Activated CD4-positive, alpha-beta T cell treated with anti-CD3 and anti-CD28 coated beads, Interleukin-2, amount 10 ng/mL, durations not matched to agents 24 days and 14 days (primary cell): ENCODE measurements at regions of chr16 and their contacts with region 1.

Region 1: DNA sequence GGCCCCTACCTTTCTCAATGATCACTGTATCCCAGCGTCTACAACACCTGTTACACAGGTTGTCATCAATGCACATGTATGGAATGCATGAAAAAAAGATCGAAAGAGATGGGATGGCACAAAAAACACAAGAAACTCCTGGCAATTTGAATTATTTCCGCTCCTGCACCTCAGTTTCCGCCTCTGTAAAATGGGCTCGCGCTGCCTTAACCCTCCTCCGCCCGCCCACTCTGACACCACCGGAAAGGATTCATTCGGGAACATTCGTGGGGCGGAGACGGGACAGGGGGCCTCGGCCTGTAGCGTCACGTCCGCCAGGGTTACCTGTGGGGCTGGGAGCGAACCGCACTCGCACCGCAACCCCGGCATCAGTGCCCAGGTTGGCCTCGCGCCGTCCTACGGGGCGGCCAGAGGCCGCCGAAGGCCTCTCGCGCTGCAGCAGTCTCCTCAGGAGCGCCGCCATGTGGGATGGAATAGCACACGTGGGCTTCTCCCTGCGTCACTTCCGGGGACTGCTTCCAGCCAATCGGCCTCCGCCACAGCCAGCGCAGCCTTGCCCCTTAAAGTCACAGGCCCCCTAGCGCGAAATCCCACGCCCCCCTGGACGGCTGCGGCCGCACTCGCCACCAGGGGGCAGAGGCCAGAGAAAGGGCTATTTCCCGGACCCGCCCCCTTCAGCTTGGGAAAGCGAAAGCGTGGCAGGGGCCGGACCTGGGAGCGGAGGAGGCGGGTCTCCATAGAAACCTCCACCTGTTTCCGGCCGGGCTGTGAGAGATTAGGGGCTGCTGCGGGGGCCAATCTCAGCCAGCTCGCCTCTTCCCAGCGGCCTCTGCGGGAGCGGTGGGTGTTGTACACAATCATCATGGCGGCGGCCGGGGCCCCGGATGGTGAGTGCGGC is at the starts of genes EARS2 and UBFD1:
- DNase-seq: peak; percentile 99
- H3K4me3 Mint-ChIP-seq: peak within 1 kb of the TSS; percentile 98
- H3K27ac Mint-ChIP-seq: peak within 1 kb of the TSS; percentile 96
- H3K4me1 Mint-ChIP-seq: peaks cover 34% of the 10 kb centered on the region
- H3K27me3 Mint-ChIP-seq: no peaks in the 10 kb centered on the region
- total RNA-seq, gene EARS2: 29.7 and 31.4 TPM in 2 replicates
- total RNA-seq, gene UBFD1: 62.0 and 70.6 TPM in 2 replicates

Region 2: DNA sequence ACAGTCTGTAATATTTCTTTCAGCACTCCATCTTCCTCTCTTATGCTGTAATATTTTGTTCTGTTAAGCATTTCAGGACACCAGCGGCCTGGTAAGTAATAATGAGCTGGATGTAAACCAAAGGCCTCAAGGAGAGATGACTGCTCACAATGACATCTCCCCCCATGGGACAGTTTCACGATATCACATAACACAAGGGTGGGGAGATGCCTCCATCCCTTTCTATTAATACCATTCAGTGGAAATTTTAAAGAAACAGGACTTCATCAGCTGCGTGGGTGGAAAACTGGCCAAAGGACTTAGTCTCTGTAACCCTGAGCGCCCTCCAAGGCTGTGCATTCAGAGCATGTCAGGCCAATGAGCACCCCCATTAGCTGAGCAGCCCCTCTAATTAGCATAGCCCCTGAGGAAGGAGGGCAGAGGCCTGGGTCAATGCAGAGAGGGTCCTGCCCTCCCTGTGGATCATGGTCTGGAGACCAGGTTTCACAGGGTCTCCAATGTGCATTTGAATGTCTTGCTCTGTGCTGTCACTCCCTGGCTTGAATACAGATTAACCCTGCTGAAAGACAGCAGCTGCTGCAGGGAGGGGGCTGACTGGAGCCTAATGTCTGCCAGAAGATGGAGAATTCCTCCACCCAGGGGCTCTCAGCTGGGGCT is 586.8 kb before region 1 on chr16:
- intact Hi-C with region 1: no loop called
- DNase-seq: no peak
- H3K4me3 Mint-ChIP-seq: no peak overlapping the region
- H3K27ac Mint-ChIP-seq: no peak overlapping the region
- H3K4me1 Mint-ChIP-seq: no peaks in the 10 kb centered on the region
- H3K27me3 Mint-ChIP-seq: peaks cover 4% of the 10 kb centered on the region

Region 3: DNA sequence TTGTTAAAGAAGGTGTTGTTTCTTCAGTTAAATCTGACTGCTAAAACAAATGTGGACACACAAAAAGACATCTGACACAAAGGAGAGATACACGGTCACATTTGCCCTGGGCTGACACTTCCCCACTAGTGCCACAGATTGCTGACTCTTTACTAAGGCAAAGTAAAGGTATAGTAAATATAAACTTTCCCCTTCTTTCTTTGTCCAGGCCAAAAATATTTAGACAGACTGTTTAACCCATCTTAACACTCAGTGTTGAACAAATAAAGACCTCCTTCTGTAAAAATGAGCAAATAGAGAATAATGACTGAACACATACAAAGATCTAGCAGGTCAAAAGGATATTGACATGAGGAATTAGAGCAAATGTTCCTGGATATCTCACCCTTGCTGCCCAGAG is 316.1 kb before region 1 on chr16:
- intact Hi-C with region 1: no loop called
- DNase-seq: no peak
- H3K4me3 Mint-ChIP-seq: no peak overlapping the region
- H3K27ac Mint-ChIP-seq: no peak overlapping the region
- H3K4me1 Mint-ChIP-seq: no peaks in the 10 kb centered on the region
- H3K27me3 Mint-ChIP-seq: no peaks in the 10 kb centered on the region

Region 4: DNA sequence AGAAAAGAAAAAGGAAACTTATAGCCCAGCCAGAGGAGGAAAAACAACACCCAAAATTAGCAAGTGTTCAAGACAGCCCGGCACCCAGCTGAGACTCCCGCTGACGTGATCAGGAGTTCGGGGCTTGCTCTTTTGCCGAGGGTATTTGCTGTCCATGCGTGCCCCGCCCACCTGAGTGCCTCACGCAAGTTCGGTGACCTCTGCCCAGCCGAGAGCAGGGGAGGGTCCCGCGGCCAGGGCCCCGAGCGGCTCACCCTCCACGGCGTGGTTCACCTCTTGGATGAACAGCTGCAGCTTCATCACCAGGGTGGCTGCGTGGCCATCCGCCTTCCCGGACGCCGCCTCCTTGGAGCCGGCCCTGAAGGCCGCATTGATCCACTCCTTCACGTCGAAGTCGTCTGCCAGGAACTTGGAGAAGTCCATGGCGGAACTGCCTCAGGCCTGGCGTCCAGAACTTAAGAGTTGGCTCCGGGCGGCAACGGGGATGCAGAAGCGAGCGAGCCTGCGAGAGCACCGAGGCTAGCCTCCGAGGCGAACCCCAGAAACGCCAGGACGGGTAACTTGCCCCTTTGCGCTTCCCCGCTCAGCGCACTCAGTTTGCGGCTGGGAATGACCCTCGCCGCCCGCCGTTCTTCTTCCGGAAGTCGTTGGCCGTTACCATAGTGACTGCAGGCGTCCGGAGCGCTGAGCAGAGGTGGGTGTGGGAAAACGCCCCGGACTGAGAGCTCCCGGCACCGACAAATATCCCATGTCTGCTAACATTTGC is 104.4 kb before region 1 on chr16 and contains the start of gene COG7:
- intact Hi-C with region 1: loop called (anchors 1 kb)
- DNase-seq: peak; percentile 96
- H3K4me3 Mint-ChIP-seq: peak within 1 kb of the TSS; percentile 98
- H3K27ac Mint-ChIP-seq: peak within 1 kb of the TSS; percentile 95
- H3K4me1 Mint-ChIP-seq: peaks cover 16% of the 10 kb centered on the region
- H3K27me3 Mint-ChIP-seq: no peaks in the 10 kb centered on the region
- total RNA-seq, gene COG7: 21.6 and 25.6 TPM in 2 replicates

Region 5: GRCh38 chr16:23510164-23510914 is 46.8 kb before region 1 on chr16 and contains the start of gene GGA2:
- intact Hi-C with region 1: loop called (anchors 1 kb)
- DNase-seq: peak; percentile 94
- H3K4me3 Mint-ChIP-seq: peak within 1 kb of the TSS; percentile 91
- H3K27ac Mint-ChIP-seq: peak within 1 kb of the TSS; percentile 95
- H3K4me1 Mint-ChIP-seq: peaks cover 51% of the 10 kb centered on the region
- H3K27me3 Mint-ChIP-seq: no peaks in the 10 kb centered on the region
- total RNA-seq, gene GGA2: 109 and 113 TPM in 2 replicates

Region 6: GRCh38 chr16:23640931-23641765 is 84.0 kb after region 1 on chr16 and contains the starts of genes DCTN5 and PALB2:
- intact Hi-C with region 1: loop called (anchors 1 kb)
- DNase-seq: peak; percentile 97
- H3K4me3 Mint-ChIP-seq: peak within 1 kb of the TSS; percentile 97
- H3K27ac Mint-ChIP-seq: peak within 1 kb of the TSS; percentile 93
- H3K4me1 Mint-ChIP-seq: peaks cover 32% of the 10 kb centered on the region
- H3K27me3 Mint-ChIP-seq: no peaks in the 10 kb centered on the region
- total RNA-seq, gene DCTN5: 98.3 and 99.4 TPM in 2 replicates
- total RNA-seq, gene PALB2: 31.2 and 35.7 TPM in 2 replicates

Region 7: DNA sequence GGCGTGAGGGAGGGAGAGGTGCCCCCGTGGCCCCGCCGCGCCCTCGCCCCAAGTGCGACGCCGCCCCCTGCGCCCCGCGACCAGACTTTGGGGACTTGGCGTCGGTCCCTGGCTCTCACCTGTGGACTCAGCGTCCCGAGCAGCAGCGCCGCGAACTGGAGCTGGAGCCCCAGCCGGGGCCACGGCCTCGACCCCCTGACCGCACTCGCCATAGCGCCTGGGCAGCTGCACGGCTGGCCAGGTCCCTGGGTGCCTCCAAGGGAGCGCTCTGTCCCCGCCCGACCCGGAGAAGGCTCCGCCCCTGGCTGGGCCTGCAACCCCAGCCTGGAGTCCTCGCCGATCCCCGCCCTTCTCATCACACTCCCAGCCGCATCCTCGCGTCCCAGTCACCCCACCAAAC is 155.8 kb after region 1 on chr16 and contains the start of gene ERN2:
- intact Hi-C with region 1: no loop called
- DNase-seq: no peak
- H3K4me3 Mint-ChIP-seq: no peak within 1 kb of the TSS
- H3K27ac Mint-ChIP-seq: no peak within 1 kb of the TSS
- H3K4me1 Mint-ChIP-seq: no peaks in the 10 kb centered on the region
- H3K27me3 Mint-ChIP-seq: peaks cover 36% of the 10 kb centered on the region
- total RNA-seq, gene ERN2: not detected in 2 replicates

Region 8: DNA sequence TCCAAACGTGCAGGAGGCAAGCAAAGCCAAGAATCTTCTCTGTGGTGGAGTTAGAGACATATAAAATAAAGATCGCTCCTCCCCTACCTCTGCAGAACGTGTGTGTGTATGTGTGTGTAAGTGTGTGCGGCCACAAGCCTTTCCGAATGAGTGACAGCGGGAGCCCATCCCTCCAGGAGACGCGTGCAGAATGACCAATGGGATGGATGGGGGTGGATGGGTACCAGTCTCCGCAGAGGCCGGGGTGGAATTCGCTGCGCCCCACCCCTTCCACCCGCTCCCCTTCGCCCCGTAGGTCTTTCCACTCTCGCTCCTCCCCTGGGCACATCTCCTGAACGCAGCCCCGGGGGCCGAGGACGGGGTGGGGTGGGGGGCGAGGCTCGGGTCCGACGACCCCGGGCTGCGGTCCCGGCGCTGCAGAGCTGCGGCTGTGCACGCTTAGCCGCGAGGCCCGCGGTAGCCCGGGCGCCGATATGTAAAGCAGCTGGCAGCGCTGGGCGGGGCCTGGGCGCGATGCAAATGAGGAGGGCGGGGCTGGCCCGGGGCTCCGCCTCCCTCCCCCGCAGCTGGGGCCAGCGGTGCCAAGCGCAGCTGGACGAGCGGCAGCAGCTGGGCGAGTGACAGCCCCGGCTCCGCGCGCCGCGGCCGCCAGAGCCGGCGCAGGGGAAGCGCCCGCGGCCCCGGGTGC is 278.4 kb after region 1 on chr16 and contains the start of gene PRKCB:
- intact Hi-C with region 1: loop called (anchors 5 kb)
- DNase-seq: peak; percentile 98
- H3K4me3 Mint-ChIP-seq: peak within 1 kb of the TSS; percentile 94
- H3K27ac Mint-ChIP-seq: peak within 1 kb of the TSS; percentile 82
- H3K4me1 Mint-ChIP-seq: peaks cover 56% of the 10 kb centered on the region
- H3K27me3 Mint-ChIP-seq: no peaks in the 10 kb centered on the region
- total RNA-seq, gene PRKCB: 79.9 and 84.2 TPM in 2 replicates

Region 9: DNA sequence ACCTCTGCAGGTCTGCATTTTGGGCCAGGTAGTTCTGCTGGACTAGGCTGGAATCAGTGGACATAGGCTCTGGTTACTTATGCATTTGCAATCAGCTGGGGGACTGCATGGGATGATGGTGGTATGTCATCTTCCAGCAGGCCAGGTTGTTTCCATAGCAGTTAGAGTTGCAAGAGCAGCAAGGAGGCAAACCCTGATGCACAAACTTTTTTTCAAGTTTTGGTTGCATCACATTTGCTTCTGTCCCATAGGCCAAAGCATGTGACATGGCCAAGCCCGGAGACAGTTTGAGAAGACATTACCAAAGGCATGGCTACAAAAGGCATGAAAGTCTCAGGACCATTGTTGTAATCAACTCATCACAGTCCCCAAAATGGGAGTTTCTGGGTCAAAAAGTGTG is 336.9 kb after region 1 on chr16:
- intact Hi-C with region 1: no loop called
- DNase-seq: no peak
- H3K4me3 Mint-ChIP-seq: no peak overlapping the region
- H3K27ac Mint-ChIP-seq: no peak overlapping the region
- H3K4me1 Mint-ChIP-seq: peaks cover 17% of the 10 kb centered on the region
- H3K27me3 Mint-ChIP-seq: no peaks in the 10 kb centered on the region